PC-3 (cell line): ENCODE measurements at regions of chr2 and their contacts with region 1.

Region 1: GRCh38 chr2:235595422-235596010 is 101.7 kb downstream of the AGAP1 start:
- DNase-seq: peak; percentile 80
- ATAC-seq: peak; percentile 66
- H3K4me3 ChIP-seq: no peak overlapping the region
- H3K27ac ChIP-seq: no peak overlapping the region
- H3K4me1 ChIP-seq: no peaks in the 10 kb centered on the region
- H3K27me3 ChIP-seq: no peaks in the 10 kb centered on the region
- CTCF ChIP-seq: peak; percentile 84

Region 2: GRCh38 chr2:235135990-235136561 is 459.4 kb before region 1 on chr2:
- CTCF ChIA-PET with region 1: interaction called, 3 read pairs
- POLR2A ChIA-PET with region 1: no interaction called
- intact Hi-C with region 1: loop called (anchors 1 kb)
- DNase-seq: peak; percentile 86
- ATAC-seq: peak; percentile 94
- H3K4me3 ChIP-seq: no peak overlapping the region
- H3K27ac ChIP-seq: no peak overlapping the region
- H3K4me1 ChIP-seq: no peaks in the 10 kb centered on the region
- H3K27me3 ChIP-seq: no peaks in the 10 kb centered on the region
- CTCF ChIP-seq: peak; percentile 83

Region 3: DNA sequence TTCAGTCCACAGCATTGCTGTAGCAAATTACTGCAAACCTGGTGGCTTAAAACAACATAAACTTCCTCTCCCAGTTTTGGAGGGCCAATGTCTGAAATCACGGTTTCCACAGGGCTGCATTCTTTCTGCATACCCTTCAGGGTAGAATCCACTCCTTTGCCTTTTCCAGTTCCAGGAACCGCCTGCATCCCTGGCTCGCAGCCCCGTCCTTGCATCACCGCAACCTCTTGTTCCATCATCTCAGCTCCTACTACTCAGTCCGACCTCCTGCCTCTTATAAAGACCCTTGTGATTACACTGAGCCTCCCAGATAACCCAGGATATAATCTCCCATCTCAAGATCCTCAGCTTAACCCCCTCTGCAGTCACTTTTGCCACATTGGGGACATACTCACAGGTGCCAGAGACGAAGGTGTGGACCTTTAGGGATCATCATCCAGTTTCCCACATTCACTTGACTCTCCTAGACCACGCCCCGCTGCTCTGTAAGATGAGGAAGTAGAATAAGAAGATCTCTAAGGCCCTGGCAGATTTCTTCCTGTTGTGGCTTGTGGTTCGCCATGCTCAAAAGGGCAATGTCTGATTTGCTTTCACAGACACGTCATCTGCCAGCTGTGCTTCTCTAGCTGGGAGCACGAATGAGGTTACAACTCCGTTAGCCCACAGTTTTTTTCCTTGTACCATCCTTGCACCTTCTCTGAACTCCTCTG is 205.3 kb before region 1 on chr2:
- CTCF ChIA-PET with region 1: no interaction called
- POLR2A ChIA-PET with region 1: no interaction called
- intact Hi-C with region 1: no loop called
- DNase-seq: no peak
- ATAC-seq: no peak
- H3K4me3 ChIP-seq: no peak overlapping the region
- H3K27ac ChIP-seq: no peak overlapping the region
- H3K4me1 ChIP-seq: peaks cover 15% of the 10 kb centered on the region
- H3K27me3 ChIP-seq: no peaks in the 10 kb centered on the region
- CTCF ChIP-seq: no peak

Region 4: GRCh38 chr2:235493775-235494715 is 101.5 kb before region 1 on chr2 and contains the start of gene AGAP1:
- CTCF ChIA-PET with region 1: no interaction called
- POLR2A ChIA-PET with region 1: no interaction called
- intact Hi-C with region 1: loop called (anchors 2 kb)
- DNase-seq: peak; percentile 90
- ATAC-seq: peak; percentile 80
- H3K4me3 ChIP-seq: peak within 1 kb of the TSS; percentile 81
- H3K27ac ChIP-seq: peak within 1 kb of the TSS; percentile 54
- H3K4me1 ChIP-seq: peaks cover 20% of the 10 kb centered on the region
- H3K27me3 ChIP-seq: no peaks in the 10 kb centered on the region
- CTCF ChIP-seq: no peak
- total RNA-seq, gene AGAP1: 28.6 and 31.0 TPM in 2 replicates

Region 5: GRCh38 chr2:235577404-235578330 is 17.8 kb before region 1 on chr2:
- CTCF ChIA-PET with region 1: no interaction called
- POLR2A ChIA-PET with region 1: no interaction called
- intact Hi-C with region 1: no loop called
- DNase-seq: no peak
- ATAC-seq: no peak
- H3K4me3 ChIP-seq: no peak overlapping the region
- H3K27ac ChIP-seq: no peak overlapping the region
- H3K4me1 ChIP-seq: peaks cover 6% of the 10 kb centered on the region
- H3K27me3 ChIP-seq: no peaks in the 10 kb centered on the region
- CTCF ChIP-seq: no peak

Region 6: GRCh38 chr2:235666213-235666781 is 70.8 kb after region 1 on chr2:
- CTCF ChIA-PET with region 1: no interaction called
- POLR2A ChIA-PET with region 1: no interaction called
- intact Hi-C with region 1: loop called (anchors 1 kb)
- DNase-seq: peak; percentile 80
- ATAC-seq: peak; percentile 32
- H3K4me3 ChIP-seq: peak overlapping the region; percentile 66
- H3K27ac ChIP-seq: peak overlapping the region; percentile 42
- H3K4me1 ChIP-seq: peaks cover 22% of the 10 kb centered on the region
- H3K27me3 ChIP-seq: no peaks in the 10 kb centered on the region
- CTCF ChIP-seq: no peak

Region 7: DNA sequence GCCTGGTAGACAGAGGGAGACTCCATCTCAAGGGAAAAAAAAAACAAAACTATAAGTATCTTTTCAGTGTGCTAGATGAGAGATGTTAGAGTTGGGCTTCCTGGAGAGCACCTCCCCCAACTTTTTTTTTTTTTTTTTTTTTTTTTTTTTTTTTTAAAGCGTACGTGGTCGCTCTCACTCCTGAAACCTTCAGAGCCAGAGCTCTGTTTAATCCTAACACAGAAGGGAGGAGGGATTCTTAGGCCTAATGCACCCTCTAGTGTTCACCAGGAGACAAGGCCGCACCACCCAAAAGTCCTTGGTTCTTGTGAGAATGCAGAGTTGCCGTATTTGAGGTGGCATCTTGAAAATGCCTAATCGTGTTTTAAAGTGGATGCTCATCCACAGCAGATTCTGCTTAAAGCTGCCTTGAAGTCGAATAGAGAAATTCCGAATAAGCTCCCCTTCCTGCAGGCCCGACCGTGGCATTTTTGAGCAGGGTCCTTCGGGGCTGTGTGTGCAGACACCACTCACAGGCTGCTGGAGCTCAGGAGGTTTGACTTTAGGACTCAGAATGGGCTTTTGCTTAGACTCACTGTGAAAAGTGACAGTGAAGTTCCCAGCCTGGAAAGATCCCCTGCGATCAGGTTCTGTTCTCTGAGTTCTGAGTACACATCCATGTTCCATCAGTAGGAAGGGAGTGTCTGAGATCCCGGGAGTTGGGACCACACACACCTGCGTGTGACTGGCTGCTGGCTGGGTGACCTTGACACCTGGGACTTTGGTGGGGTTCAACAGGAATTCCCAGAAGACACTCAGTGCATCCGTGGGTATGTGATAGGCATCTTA is 151.0 kb after region 1 on chr2:
- CTCF ChIA-PET with region 1: interaction called, 25 read pairs
- POLR2A ChIA-PET with region 1: no interaction called
- intact Hi-C with region 1: loop called (anchors 1 kb)
- DNase-seq: peak; percentile 81
- ATAC-seq: peak; percentile 97
- H3K4me3 ChIP-seq: no peak overlapping the region
- H3K27ac ChIP-seq: no peak overlapping the region
- H3K4me1 ChIP-seq: peaks cover 6% of the 10 kb centered on the region; the same call in 1 of the 2 replicates
- H3K27me3 ChIP-seq: no peaks in the 10 kb centered on the region
- CTCF ChIP-seq: peak; percentile 79